GM12878 (cell line): ENCODE measurements at regions of chr11 and their contacts with region 1.

Region 1: DNA sequence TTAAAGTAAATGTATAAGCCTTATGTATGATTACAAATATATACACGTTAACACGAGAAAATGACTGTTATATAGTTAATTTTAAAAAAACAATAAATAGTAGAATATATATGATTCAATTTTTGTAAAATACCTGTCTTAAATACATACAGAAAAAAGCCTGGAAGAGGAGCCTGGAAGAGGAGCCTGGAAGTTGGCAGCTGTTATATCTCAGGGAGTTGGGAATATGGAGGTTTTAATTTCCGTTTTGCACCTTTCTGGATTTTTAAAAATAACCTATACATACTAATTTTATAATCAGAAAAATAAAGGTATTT is 111.6 kb downstream of the WT1 start:
- DNase-seq: no peak
- ATAC-seq: no peak
- H3K4me3 ChIP-seq: no peak overlapping the region
- H3K27ac ChIP-seq: no peak overlapping the region
- H3K4me1 ChIP-seq: no peaks in the 10 kb centered on the region
- H3K27me3 ChIP-seq: 0 out of 4 replicates have a peak, but pooled peaks cover 0 to 2% of the 10 kb centered on the region in 2 experiments
- CTCF ChIP-seq: no peak
- EP300 ChIP-seq: no peak
- POLR2A ChIP-seq: no peak
- RAD21 ChIP-seq: no peak

Region 2: DNA sequence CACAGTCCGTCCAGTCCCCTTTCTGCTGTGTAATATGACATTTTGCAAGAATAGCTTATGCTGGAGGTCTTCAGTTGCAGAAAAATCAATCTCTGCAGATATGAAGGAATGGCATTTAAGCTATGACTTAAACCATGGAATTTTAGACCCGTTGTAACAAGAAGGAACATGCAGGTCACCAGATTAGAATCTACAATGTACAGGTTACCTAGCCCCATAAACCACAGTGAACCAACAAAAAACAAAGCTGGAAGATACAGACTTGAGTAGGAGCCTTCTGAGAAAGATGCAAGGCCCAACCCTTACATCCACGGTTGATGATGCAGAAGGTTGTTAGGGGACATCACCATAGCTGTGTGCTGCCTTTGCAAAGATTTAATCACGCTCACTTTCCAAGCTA is 21.0 kb before region 1 on chr11:
- CTCF ChIA-PET with region 1: interaction called, 11 read pairs
- POLR2A ChIA-PET with region 1: no interaction called
- RAD21 ChIA-PET with region 1: no interaction called
- SMC1A ChIA-PET with region 1: interaction called, 4 read pairs
- in situ Hi-C with region 1: no loop called
- intact Hi-C with region 1: no loop called
- DNase-seq: no peak
- ATAC-seq: no peak
- H3K4me3 ChIP-seq: no peak overlapping the region
- H3K27ac ChIP-seq: no peak overlapping the region
- H3K4me1 ChIP-seq: no peaks in the 10 kb centered on the region
- H3K27me3 ChIP-seq: no peaks in the 10 kb centered on the region
- CTCF ChIP-seq: no peak
- EP300 ChIP-seq: no peak
- POLR2A ChIP-seq: no peak
- RAD21 ChIP-seq: no peak

Region 3: DNA sequence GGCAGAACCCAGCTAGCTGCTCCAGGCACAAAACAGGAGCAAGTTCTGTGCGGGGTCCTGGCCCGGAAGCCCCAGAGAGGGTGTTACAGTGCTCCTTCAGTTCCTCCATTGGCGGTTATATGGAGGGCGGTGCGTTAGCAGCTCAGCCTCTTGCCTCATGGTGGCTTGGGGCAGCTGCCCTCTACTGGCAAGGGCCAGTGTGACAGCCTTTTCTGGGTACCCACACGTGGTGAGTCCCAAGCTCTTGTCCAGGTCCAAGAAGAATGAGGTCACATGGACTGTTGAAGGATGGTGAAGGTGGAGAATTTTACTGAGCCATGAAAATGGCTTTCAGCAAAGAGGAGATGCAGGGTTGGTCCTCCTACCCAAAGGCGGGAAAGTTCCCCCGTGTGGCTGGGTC is 11.1 kb after region 1 on chr11:
- CTCF ChIA-PET with region 1: interaction called, 14 read pairs
- POLR2A ChIA-PET with region 1: interaction called, 3 read pairs
- RAD21 ChIA-PET with region 1: no interaction called
- SMC1A ChIA-PET with region 1: interaction called, 4 read pairs
- in situ Hi-C with region 1: no loop called
- intact Hi-C with region 1: no loop called
- DNase-seq: no peak
- ATAC-seq: no peak; the same call in 2 of the 3 replicates
- H3K4me3 ChIP-seq: no peak overlapping the region
- H3K27ac ChIP-seq: no peak overlapping the region
- H3K4me1 ChIP-seq: no peaks in the 10 kb centered on the region
- H3K27me3 ChIP-seq: peaks cover 1 to 6% of the 10 kb centered on the region in 2 experiments; a peak in 2 of 4 replicates
- CTCF ChIP-seq: peak in 2 of 3 experiments; percentile 13 to 30; a peak in 2 of 6 replicates
- EP300 ChIP-seq: no peak
- POLR2A ChIP-seq: no peak
- RAD21 ChIP-seq: no peak

Region 4: DNA sequence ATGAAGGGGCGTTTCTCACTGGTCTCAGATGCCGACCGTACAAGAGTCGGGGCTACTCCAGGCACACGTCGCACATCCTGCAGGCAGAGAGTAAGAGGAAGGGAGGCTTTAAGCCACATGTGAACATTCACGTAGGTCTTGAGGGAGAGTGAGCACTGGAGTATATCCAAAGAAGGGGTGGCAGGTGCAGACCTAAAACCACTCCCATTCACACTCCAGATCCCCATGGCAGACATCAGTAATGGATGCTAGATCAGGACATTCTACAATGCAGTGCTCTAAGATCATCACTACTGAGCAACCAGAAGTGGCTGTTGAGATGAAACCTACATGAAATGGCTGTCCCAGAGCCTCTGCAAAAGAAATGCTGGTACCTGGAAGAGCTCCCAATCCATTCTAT is 72.6 kb after region 1 on chr11:
- CTCF ChIA-PET with region 1: interaction called, 47 read pairs
- POLR2A ChIA-PET with region 1: interaction called, 7 read pairs
- RAD21 ChIA-PET with region 1: interaction called, 37 read pairs
- SMC1A ChIA-PET with region 1: interaction called, 28 read pairs
- in situ Hi-C with region 1: no loop called
- intact Hi-C with region 1: no loop called
- DNase-seq: peak; percentile 27
- ATAC-seq: peak; percentile 62
- H3K4me3 ChIP-seq: no peak overlapping the region
- H3K27ac ChIP-seq: no peak overlapping the region
- H3K4me1 ChIP-seq: no peaks in the 10 kb centered on the region
- H3K27me3 ChIP-seq: no peaks in the 10 kb centered on the region; a peak in 1 of 4 replicates
- CTCF ChIP-seq: no peak
- EP300 ChIP-seq: no peak
- POLR2A ChIP-seq: no peak
- RAD21 ChIP-seq: no peak

Region 5: DNA sequence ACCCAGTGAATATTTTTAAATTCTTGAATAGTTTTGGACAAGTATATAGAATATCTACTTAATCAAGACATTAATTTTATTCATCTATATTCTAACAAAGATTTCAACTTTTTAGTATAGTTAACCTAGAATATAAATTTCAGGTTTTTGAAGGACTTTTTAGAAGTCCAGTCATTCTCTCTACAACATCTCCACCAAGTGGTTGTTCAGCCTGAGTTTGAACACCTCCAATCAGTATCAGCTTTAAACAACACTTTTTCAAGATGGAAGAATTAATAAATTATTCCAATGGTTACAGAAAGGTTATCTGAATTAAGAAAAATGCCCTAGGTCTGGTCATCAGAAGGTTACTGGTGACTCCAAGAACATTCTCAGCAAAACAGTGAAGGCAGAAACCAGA is 291.6 kb after region 1 on chr11:
- CTCF ChIA-PET with region 1: interaction called, 7 read pairs
- POLR2A ChIA-PET with region 1: interaction called, 3 read pairs
- RAD21 ChIA-PET with region 1: interaction called, 5 read pairs
- SMC1A ChIA-PET with region 1: interaction called, 13 read pairs
- in situ Hi-C with region 1: no loop called
- intact Hi-C with region 1: loop called (anchors 5 kb)
- DNase-seq: no peak
- ATAC-seq: no peak
- H3K4me3 ChIP-seq: no peak overlapping the region
- H3K27ac ChIP-seq: no peak overlapping the region
- H3K4me1 ChIP-seq: no peaks in the 10 kb centered on the region
- H3K27me3 ChIP-seq: no peaks in the 10 kb centered on the region
- CTCF ChIP-seq: peak in 2 of 3 experiments; percentile 7 to 45; a peak in 2 of 6 replicates
- EP300 ChIP-seq: no peak
- POLR2A ChIP-seq: no peak
- RAD21 ChIP-seq: peak; percentile 71